Sigmoid colon (tissue), 7 donors: ENCODE measurements at regions of chr5 and their contacts with region 1.

Region 1: DNA sequence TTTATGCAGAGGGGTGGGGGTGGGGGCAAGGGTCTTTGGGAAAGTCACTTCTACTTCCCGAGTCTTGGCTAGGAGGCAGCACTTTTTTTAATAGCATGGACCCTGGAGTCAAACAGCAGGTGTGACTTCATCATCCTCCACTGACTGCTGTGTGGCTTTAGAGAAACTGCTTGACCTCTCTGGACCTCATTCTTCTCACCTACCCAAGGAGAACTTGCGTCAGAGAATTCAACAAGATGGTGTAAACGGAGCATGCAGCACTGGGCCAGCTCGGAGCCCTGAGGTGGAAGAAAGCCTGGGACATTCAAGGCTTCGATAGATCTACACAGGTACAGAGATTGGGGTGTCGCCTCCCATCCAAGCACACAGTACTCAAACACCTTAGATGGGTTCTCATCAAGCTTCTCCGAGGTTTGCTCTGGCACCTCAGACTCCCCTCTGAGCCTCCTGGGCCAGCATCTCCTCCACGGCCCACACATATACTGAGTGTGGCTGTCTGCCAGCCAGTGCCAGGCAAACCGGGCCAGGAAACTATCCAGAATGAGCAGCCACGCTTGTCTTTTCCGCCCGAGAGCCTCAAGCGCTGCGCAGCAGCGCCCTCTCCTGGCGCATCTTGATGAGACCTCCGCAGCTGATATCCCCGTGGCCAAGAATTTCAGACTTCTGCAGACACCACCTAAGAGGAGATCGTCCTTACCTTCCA is 4.6 kb upstream of the SLC25A48 start:
- DNase-seq: peak; percentile 87
- H3K4me3 ChIP-seq: no peak overlapping the region
- H3K27ac ChIP-seq: no peak overlapping the region
- H3K4me1 ChIP-seq: peaks cover 0 to 15% (median 12%) of the 10 kb centered on the region in 4 donors
- H3K27me3 ChIP-seq: peaks cover 7 to 38% (median 8%) of the 10 kb centered on the region in 3 donors
- CTCF ChIP-seq: peak; percentile 5 to 79 (median 62)
- EP300 ChIP-seq: no peak
- POLR2A ChIP-seq: no peak

Region 2: GRCh38 chr5:135437796-135438560 is 391.9 kb before region 1 on chr5:
- intact Hi-C with region 1: no loop called
- DNase-seq: peak; percentile 90
- H3K4me3 ChIP-seq: no peak overlapping the region
- H3K27ac ChIP-seq: peak overlapping the region in 3 of 4 donors; percentile 32 to 65 (median 58)
- H3K4me1 ChIP-seq: peaks cover 0 to 34% (median 28%) of the 10 kb centered on the region in 4 donors
- H3K27me3 ChIP-seq: no peaks in the 10 kb centered on the region
- CTCF ChIP-seq: no peak
- EP300 ChIP-seq: no peak
- POLR2A ChIP-seq: no peak

Region 3: GRCh38 chr5:135466178-135467050 is 363.4 kb before region 1 on chr5:
- intact Hi-C with region 1: loop called (anchors 5 kb)
- DNase-seq: peak; percentile 87
- H3K4me3 ChIP-seq: peak overlapping the region in 3 of 4 donors; percentile 20 to 29 (median 26)
- H3K27ac ChIP-seq: no peak overlapping the region
- H3K4me1 ChIP-seq: peaks cover 0 to 11% (median 4%) of the 10 kb centered on the region in 4 donors
- H3K27me3 ChIP-seq: peaks cover 0 to 27% (median 0%) of the 10 kb centered on the region in 3 donors
- CTCF ChIP-seq: peak; percentile 51 to 90 (median 70)
- EP300 ChIP-seq: no peak
- POLR2A ChIP-seq: no peak

Region 4: GRCh38 chr5:135560858-135561257 is 269.0 kb before region 1 on chr5:
- intact Hi-C with region 1: loop called (anchors 1 kb)
- DNase-seq: peak; percentile 83
- H3K4me3 ChIP-seq: no peak overlapping the region
- H3K27ac ChIP-seq: no peak overlapping the region
- H3K4me1 ChIP-seq: peaks cover 0 to 4% (median 0%) of the 10 kb centered on the region in 4 donors
- H3K27me3 ChIP-seq: peaks cover 0 to 20% (median 4%) of the 10 kb centered on the region in 3 donors
- CTCF ChIP-seq: peak; percentile 47 to 84 (median 68)
- EP300 ChIP-seq: no peak
- POLR2A ChIP-seq: no peak